ENCODE measurements at regions of chr2 and their contacts with region 1.

Region 1: GRCh38 chr2:175366815-175367214 is 185.3 kb upstream of the ATP5MC3 start:
- DNase-seq: no peak
- H3K4me3 ChIP-seq: no peak overlapping the region
- H3K27ac ChIP-seq: no peak overlapping the region
- H3K4me1 ChIP-seq: no peaks in the 10 kb centered on the region
- H3K27me3 ChIP-seq: peaks cover 0 to 76% (median 0%) of the 10 kb centered on the region in 4 donors
- CTCF ChIP-seq: peak in 5 of 6 experiments; percentile 41 to 60 (median 52)
- POLR2A ChIP-seq: no peak

Region 2: GRCh38 chr2:175282290-175282689 is 84.5 kb before region 1 on chr2:
- intact Hi-C with region 1: no loop called
- DNase-seq: no peak
- H3K4me3 ChIP-seq: no peak overlapping the region
- H3K27ac ChIP-seq: no peak overlapping the region
- H3K4me1 ChIP-seq: no peaks in the 10 kb centered on the region
- H3K27me3 ChIP-seq: no peaks in the 10 kb centered on the region
- CTCF ChIP-seq: peak in 5 of 6 experiments; percentile 16 to 54 (median 29)
- POLR2A ChIP-seq: no peak

Region 3: DNA sequence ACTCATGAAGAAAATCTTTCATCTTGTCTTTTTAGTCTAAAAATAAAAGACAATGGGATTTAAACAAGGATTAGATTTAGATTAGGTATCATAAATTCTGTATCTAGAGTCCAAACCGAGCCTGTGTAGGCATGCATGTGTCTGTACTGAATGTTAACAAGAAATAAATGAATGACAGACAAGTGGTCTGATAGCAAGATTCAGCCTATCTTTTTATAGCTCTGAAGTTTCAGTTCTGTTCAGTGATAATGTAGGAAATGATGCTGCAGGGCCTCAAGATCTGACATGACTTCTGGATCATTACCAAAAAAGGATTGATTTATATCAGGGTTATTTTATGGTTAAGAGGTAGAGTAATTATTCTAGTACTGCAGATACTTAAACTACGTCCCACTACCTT is 48.3 kb before region 1 on chr2:
- intact Hi-C with region 1: no loop called
- DNase-seq: no peak
- H3K4me3 ChIP-seq: no peak overlapping the region
- H3K27ac ChIP-seq: no peak overlapping the region
- H3K4me1 ChIP-seq: no peaks in the 10 kb centered on the region
- H3K27me3 ChIP-seq: no peaks in the 10 kb centered on the region
- CTCF ChIP-seq: no peak
- POLR2A ChIP-seq: no peak

Region 4: GRCh38 chr2:176088048-176088936 is 721.5 kb after region 1 on chr2:
- intact Hi-C with region 1: loop called (anchors 10 kb)
- DNase-seq: no peak
- H3K4me3 ChIP-seq: peak overlapping the region in 3 of 4 donors; percentile 13 to 56 (median 25)
- H3K27ac ChIP-seq: no peak overlapping the region
- H3K4me1 ChIP-seq: peaks cover 17 to 54% (median 18%) of the 10 kb centered on the region in 3 donors
- H3K27me3 ChIP-seq: peaks cover 41 to 100% (median 81%) of the 10 kb centered on the region in 4 donors
- CTCF ChIP-seq: peak; percentile 28 to 71 (median 46)
- POLR2A ChIP-seq: no peak